ENCODE measurements at regions of chr4 and their contacts with region 1.

Region 1: DNA sequence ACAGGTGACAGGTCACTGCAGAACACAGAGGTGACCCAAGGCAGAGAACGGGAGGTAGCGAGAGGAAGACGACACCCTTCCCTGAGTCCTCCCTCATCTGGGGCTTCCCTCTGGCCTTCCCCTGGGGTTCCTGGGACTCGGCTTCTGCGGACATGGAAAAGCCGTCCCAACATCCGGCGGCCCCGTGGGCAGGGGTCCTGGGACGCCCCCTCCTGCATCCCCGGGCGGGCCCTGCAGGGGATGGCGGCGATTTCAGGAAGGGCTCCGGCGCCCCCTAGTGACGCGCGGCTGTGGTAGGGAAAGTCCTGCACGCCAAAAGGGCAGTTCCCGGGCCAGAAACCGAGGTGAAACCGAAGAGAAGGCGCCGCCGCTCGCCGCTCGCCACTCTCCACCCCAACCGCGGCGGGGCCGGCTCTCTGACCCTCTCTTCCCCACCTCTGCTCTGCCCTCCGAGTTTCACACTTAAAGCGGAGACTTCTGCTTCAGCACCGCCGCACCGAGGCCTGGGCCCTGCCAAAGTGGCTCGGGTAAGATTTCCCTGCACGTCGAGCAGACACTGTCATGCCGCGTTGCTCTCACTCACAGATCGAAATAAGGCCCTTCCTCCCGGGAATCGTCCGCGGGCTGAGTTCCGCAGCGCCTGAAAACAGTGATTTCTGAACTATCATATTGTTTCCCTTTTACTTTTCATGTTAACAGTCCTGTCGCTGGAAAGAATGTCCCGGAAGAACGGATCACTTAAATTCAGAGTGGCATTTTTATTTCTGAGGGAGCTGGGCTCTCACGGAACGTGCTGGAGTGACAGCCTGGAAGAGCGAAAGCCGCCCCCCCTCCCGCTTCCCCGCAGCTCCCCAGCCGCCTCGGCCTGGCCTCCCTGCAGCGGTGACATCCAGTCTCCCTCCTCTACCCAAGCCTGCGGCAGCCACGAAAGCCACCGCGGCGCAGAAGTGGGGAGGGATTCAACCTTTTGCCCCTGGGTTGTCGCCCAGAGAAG is 110.6 kb downstream of the DCTD start:
- DNase-seq: peak; percentile 53 to 90 (median 76)
- ATAC-seq: peak; percentile 93 to 97 (median 94)
- H3K4me3 ChIP-seq: peak overlapping the region in 3 of 4 donors; percentile 9 to 33 (median 31)
- H3K27ac ChIP-seq: no peak overlapping the region
- H3K4me1 ChIP-seq: no peaks in the 10 kb centered on the region
- H3K27me3 ChIP-seq: no peaks in the 10 kb centered on the region
- CTCF ChIP-seq: peak; percentile 54 to 80 (median 77)

Region 2: GRCh38 chr4:182265881-182266280 is 540.7 kb before region 1 on chr4:
- intact Hi-C with region 1: no loop called
- DNase-seq: no peak
- ATAC-seq: no peak
- H3K4me3 ChIP-seq: no peak overlapping the region
- H3K27ac ChIP-seq: no peak overlapping the region
- H3K4me1 ChIP-seq: no peaks in the 10 kb centered on the region
- H3K27me3 ChIP-seq: no peaks in the 10 kb centered on the region
- CTCF ChIP-seq: no peak

Region 3: DNA sequence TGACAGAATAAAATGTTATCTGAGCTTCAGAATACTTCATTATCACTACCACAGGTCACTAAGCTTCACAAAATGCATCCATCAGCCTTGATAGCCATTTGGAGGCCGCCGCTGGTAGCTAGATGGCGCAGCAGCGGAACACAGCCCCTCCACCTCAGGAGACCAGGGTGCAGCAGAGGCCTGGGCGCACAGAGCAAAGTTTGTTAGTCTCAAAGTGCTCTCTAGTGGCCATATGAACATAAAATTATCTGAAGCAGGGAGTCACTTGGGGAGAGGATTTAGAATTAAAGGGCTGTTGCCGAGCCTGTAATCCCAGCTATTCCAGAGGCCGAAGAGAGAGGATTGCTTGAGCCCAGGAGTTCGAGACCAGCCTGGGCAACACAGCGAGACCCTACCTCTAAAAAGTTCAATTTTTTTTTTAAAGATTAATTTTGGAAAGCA is 118.8 kb after region 1 on chr4:
- intact Hi-C with region 1: loop called in 1 of 3 experiments (anchors 10 kb)
- DNase-seq: peak; percentile 72 to 87 (median 82)
- ATAC-seq: peak; percentile 90 to 96 (median 96)
- H3K4me3 ChIP-seq: no peak overlapping the region
- H3K27ac ChIP-seq: no peak overlapping the region
- H3K4me1 ChIP-seq: peaks cover 0 to 11% (median 7%) of the 10 kb centered on the region in 3 donors
- H3K27me3 ChIP-seq: no peaks in the 10 kb centered on the region
- CTCF ChIP-seq: peak; percentile 19 to 68 (median 48)

Measured in pancreas (tissue), 10 donors.